ENCODE measurements at regions of chr18 and their contacts with region 1.

Region 1: GRCh38 chr18:33761363-33761762 is 183.3 kb downstream of the ASXL3 start:
- DNase-seq: no peak
- ATAC-seq: no peak

Region 2: DNA sequence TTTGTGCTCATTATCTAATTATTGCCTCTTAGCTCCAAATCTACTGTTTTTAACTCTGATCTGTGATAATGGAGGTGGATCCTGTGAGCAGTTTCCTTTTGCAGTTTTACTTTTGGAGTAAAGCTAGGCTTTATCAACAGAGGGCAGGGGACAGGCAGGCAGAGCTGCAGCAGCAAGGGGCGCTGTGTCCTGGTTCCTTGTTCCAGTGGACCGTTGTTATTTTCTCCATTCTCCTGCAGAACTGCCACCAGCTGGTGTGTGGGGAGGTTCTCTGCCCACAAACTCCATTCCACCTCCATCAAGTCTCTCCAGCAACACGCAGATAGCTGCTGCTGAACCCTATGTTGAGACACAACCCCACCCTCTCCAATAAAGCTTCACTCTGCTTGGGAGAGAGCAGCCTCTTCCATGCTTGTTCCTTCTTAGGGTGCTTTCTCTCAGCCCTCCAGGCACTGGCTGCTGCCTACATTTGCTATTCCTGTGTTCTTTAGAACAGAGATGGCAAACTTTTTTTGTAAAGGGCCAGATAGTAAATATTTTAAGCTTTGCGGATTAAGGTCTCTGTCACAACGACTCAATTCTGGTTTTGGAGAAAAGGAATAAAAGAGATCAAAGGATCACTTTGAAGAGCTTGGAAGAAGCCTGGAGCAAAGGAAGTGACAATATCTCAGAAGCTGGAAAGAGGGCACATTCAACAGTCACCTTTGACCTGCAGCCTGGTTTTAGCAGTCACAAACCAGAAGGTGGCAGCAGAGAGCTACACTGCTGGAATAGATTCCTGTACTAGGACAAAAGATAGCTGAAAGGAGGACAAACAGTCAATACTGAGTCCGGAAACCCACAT is 529.7 kb before region 1 on chr18:
- intact Hi-C with region 1: loop called (anchors 5 kb)
- DNase-seq: peak; percentile 41
- ATAC-seq: no peak

Region 3: DNA sequence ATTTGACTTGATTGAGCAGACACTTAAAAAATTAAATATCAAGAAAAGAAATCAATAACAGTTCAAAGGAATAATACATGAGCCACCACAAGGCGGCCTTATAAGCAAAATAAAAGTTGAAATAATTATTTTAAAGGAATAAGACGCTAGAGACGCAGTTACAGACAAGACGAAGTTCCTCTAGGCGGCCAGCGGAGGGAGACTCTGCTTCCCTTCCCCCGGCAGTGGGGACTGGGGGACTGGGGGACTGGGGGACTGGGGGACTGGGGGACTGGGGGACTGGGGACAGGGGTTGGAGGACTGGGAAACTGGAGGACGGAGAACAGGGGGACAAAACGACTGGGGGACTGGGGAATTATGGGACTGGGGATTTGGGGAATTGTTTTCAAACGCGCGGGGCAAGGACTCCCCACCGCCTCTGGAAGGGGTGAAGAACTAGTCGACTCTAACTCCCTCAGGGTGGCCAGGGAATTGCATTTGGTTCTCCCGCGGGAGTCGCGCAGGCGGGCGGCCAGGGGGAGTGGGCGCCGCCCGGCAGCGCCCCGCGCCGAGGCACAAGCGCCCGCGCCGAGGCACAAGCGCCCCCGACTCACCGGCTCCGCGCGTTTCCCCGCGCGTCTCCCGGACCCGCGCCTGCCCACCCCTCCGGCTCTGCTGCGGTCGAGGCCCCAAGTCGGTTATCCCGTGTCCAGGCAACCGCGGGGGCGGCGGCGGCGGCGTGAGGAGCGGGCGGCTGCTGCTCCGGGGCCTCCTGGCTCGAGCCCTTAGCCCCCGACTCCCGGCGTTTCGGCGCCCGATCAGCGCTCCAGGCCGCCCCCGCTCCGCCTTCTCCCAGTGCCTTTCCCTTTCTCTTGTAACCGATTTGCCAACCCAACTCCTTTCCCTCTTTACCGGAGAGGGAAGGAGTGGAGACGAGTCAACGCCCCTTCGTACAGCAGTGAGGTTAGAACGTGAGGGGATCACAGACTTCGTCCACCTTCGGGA is 321.0 kb before region 1 on chr18 and contains the start of gene CCDC178:
- intact Hi-C with region 1: loop called (anchors 5 kb)
- DNase-seq: peak; percentile 59
- ATAC-seq: peak; percentile 67
- total RNA-seq, gene CCDC178: 0.27 TPM

Region 4: DNA sequence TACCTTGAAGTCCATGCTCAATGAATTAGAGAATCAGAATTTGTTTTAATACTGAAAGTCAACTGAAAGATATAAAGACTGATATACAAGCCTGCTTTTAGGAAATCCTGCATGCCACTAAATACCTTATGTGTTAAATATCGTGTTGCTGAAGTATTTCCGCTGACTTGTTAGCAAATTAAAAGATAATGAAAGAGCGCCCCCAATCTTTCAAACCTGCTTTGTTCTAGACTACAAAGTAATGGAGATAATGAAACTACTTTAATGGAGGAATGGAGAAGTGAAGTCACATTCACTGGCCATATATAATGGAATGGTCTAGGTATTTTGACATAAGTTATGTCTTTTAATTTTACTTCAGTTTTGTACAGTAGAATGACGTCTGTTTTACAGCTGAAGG is 87.7 kb before region 1 on chr18:
- intact Hi-C with region 1: no loop called
- DNase-seq: no peak
- ATAC-seq: no peak

Region 5: DNA sequence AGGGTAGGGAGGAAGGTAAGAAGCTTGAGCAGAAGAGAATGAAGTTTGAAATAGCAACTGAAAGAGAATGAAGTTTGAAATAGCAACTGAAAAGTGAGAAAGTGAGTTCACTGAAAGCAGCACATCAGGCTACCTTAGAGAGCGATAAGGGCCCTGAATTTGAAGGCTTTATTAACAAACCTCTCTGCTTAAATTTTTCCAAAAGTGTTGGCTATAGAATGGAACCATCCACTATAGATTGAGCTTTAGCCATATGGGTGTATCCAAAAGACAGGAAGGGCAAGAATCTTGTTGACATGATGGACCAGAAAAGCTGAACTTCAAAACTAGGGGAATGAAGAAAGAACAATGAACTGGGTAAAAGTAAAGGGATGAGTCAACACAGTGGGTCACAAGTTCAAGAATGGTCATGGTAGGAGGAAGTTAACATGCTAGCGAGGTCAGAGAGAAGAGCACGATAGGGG is 60.8 kb before region 1 on chr18:
- intact Hi-C with region 1: no loop called
- DNase-seq: no peak
- ATAC-seq: no peak

Region 6: GRCh38 chr18:33833847-33834246 is 72.5 kb after region 1 on chr18:
- intact Hi-C with region 1: no loop called
- DNase-seq: no peak
- ATAC-seq: no peak